Body of pancreas (tissue), 4 donors: ENCODE measurements at regions of chr6 and their contacts with region 1.

Region 1: DNA sequence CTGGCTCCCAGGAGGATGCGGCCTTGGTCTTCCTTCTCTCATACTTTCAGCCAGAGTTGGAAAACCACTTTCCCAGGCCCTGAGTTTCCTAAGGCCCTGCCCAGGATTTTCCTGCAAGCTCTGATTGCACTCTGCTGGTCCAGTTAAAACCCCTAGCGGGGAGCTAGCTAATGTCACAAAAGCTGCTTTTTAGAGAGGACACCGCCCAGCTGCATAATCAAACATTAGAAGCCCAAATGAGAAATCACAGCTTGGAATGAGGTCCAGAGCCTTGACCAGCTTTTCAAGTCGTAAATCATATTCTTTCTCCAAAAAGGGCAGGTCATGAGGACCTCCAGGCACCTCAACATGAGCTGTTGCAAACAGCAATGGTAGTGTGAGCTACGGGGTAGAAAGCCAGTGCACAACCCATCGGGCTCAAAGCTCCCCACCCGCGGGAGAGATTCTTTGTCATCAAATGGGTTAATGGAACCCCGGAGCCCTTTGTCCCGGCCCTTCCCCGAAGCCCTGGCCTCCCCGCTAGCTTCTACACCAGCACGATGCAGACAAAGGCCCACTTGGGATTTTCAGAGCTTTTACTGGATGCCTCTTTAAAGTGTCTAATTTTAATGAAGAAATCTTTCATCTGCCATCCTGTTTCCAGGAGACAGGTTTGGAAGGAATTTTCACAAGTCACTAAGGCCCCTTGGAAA is 134.0 kb downstream of the SCML4 start:
- DNase-seq: no peak
- ATAC-seq: no peak
- H3K4me3 ChIP-seq: no peak overlapping the region
- H3K27ac ChIP-seq: no peak overlapping the region
- H3K4me1 ChIP-seq: no peaks in the 10 kb centered on the region
- H3K27me3 ChIP-seq: no peaks in the 10 kb centered on the region
- CTCF ChIP-seq: no peak
- POLR2A ChIP-seq: no peak

Region 2: DNA sequence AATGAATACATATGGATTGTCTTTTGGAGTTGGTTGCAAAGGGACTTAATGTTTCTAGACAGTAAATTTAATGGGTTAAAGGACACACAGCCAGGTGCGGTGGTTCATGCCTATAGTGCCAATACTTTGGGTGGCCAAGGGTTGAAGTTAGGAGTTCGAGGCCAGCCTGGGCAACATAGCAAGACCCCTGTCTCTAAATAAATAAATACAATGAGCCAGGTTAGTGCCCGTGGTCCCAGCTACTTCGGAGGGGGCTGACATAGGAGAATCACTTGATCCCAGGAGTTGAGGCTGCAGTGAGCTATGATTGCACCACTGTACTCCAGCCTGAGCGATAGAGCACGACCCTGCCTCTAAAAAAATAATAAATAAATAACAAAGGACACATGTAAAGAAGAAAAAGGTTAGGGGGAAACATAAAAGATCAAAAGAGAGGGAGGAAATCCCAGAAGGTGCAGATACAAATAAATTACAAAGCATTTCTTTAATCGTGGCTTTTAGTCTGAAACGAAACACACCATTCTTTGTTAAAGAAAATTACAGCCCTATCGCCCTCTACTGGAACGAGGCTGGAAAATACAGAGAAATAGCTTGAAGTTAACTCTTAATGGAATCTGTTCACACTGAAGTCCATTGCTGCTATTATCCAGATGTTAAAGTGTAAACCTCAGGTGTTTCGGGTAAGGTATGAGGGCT is 176.7 kb after region 1 on chr6:
- intact Hi-C with region 1: loop called (anchors 10 kb)
- DNase-seq: peak in 1 of 4 donors; percentile 33
- ATAC-seq: peak; percentile 57
- H3K4me3 ChIP-seq: no peak overlapping the region
- H3K27ac ChIP-seq: no peak overlapping the region
- H3K4me1 ChIP-seq: no peaks in the 10 kb centered on the region
- H3K27me3 ChIP-seq: no peaks in the 10 kb centered on the region
- CTCF ChIP-seq: peak; percentile 15 to 60 (median 56)
- POLR2A ChIP-seq: no peak